Esophagus muscularis mucosa (tissue), 4 donors: ENCODE measurements at regions of chr18 and their contacts with region 1.

Region 1: DNA sequence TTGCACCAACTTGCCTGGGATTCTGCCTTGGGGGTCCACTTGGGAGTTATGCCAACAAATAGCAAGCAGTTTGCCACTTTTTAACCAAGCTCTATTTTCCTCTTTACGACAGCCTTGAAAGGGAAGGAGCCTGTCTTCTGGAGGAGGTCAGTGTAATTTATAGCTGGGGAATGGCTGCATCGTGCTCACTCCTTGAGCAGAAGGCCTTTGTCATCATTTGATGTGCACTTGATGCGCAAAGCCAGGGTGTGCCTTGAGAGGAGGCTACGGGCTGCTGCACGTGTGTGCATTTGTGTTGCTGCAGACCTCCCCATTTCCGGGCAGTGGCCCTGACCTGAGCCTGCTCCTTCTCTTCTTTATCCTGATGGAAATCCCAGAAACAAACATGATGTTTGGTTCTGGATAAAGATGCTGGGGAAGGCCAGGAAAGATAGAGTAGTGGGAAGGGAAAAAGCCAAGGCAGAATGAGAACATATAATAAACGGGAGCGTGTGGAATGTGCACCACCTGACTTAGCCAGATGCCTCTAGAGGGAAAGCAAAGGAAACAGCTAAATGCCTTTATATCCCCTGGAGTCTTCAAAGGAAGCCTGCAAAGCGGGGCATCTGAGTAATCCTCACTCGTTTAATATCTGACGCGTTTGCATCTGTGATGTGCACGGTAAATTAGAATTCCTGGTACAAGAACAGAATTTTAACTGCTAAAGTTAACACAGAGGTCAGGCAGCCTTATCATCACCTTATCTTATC is 68.3 kb upstream of the ZNF521 start:
- DNase-seq: no peak
- H3K4me3 ChIP-seq: no peak overlapping the region
- H3K27ac ChIP-seq: no peak overlapping the region
- H3K4me1 ChIP-seq: no peaks in the 10 kb centered on the region
- H3K27me3 ChIP-seq: peaks cover 0 to 18% (median 0%) of the 10 kb centered on the region in 4 donors
- CTCF ChIP-seq: no peak
- EP300 ChIP-seq: no peak
- POLR2A ChIP-seq: no peak

Region 2: DNA sequence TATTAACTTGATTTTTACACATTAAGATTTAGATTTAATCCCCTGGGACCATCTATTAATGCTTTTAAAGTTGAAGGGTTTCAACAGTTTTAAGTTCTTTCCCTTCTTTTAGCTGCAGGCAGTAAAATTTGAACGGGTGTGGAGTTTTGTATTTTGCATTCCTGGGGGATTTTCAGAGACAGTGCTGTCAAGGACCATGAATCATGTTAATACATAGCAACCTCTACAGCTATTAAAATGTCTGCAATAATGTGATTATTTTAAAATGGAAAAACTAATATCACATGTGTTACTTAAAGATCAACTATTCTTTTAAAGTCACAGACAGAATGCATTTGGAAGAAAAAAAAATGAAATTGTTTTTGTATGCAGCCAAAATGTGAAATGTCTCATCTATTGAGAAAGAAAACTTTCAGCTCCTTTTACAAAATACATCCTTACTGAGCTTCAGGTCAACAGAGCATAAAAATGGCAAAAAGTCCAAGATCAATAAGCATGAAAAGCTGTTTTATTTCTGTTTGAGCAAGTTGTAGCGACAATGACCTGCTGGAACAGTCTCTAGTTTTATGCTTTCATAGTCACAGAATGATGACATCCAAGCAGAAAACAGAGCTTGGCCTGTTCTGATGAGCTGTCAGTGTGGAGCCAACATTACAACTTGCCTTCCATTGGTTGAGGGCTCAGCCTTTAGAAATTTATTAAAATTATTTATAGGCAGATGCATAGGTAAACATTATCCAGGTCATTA is 46.6 kb before region 1 on chr18:
- intact Hi-C with region 1: loop called (anchors 10 kb)
- DNase-seq: no peak
- H3K4me3 ChIP-seq: no peak overlapping the region
- H3K27ac ChIP-seq: no peak overlapping the region
- H3K4me1 ChIP-seq: no peaks in the 10 kb centered on the region
- H3K27me3 ChIP-seq: peaks cover 0 to 10% (median 0%) of the 10 kb centered on the region in 4 donors
- CTCF ChIP-seq: no peak
- EP300 ChIP-seq: no peak
- POLR2A ChIP-seq: no peak